Activated CD4-positive, alpha-beta T cell treated with anti-CD3 and anti-CD28 coated beads, Interleukin-2, amount 10 ng/mL, durations not matched to agents 24 days and 14 days (primary cell): ENCODE measurements at regions of chr2 and their contacts with region 1.

Region 1: DNA sequence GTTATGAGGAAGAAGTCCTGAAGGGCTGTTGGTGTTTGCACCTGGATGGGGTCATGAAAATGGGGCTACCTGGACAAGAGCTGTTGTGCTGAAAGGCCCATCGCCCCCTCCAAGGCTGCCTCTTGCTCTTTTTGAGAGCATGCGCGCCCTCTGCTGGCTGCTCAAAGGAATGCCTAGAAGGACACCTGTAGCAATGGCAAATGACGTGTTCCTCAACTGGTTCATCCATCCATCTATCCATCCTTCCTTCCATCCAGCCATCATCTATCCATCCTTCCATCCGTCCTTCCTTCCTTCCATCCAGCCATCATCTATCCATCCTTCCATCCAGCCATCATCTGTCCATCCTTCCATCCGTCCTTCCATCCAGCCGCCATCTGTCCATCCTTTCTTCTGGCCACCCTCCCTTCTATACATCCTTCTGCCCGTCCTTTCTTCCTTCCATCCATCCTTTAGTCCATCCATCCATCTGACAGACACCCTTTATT is 17.2 kb upstream of the RPL31 start:
- DNase-seq: peak; percentile 91
- H3K4me3 Mint-ChIP-seq: no peak overlapping the region
- H3K27ac Mint-ChIP-seq: no peak overlapping the region
- H3K4me1 Mint-ChIP-seq: peaks cover 2% of the 10 kb centered on the region
- H3K27me3 Mint-ChIP-seq: peaks cover 2% of the 10 kb centered on the region

Region 2: DNA sequence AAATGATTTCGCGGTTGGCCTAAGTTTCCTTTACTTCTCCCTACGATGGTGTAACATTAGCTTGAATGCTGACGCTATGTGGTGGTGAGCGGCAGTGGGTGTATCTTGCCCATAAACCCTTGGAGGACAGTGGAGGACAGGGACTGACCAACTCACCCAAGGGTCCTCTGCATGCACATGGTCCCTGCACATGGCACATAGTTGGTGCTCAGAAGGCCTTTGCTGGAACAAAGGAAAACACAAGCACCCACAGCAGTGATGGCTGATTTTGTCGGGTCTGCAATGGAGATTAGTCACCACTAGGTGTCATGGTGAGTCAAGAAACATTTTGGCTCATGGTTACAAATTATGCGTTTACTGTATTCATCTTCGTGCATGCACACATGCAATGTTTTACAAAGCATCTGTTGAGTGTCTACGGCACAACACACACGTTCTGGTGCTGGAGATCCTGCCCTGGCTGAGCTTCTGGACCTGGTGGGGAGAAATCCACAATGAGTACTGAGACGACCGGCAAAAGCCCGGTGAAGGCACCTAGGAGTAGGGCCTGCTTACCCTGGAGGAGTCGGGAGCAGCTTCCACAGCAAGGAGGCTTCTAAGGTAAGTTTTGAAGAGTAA is 378.1 kb before region 1 on chr2:
- intact Hi-C with region 1: loop called (anchors 1 kb)
- DNase-seq: peak; percentile 82
- H3K4me3 Mint-ChIP-seq: no peak overlapping the region
- H3K27ac Mint-ChIP-seq: no peak overlapping the region
- H3K4me1 Mint-ChIP-seq: peaks cover 3% of the 10 kb centered on the region
- H3K27me3 Mint-ChIP-seq: peaks cover 2% of the 10 kb centered on the region

Region 3: GRCh38 chr2:100730346-100730745 is 254.6 kb before region 1 on chr2:
- intact Hi-C with region 1: loop called (anchors 1 kb)
- DNase-seq: peak; percentile 81
- H3K4me3 Mint-ChIP-seq: no peak overlapping the region
- H3K27ac Mint-ChIP-seq: no peak overlapping the region
- H3K4me1 Mint-ChIP-seq: no peaks in the 10 kb centered on the region
- H3K27me3 Mint-ChIP-seq: peaks cover 9% of the 10 kb centered on the region